GM12878 (cell line): ENCODE measurements at regions of chr6 and their contacts with region 1.

Region 1: DNA sequence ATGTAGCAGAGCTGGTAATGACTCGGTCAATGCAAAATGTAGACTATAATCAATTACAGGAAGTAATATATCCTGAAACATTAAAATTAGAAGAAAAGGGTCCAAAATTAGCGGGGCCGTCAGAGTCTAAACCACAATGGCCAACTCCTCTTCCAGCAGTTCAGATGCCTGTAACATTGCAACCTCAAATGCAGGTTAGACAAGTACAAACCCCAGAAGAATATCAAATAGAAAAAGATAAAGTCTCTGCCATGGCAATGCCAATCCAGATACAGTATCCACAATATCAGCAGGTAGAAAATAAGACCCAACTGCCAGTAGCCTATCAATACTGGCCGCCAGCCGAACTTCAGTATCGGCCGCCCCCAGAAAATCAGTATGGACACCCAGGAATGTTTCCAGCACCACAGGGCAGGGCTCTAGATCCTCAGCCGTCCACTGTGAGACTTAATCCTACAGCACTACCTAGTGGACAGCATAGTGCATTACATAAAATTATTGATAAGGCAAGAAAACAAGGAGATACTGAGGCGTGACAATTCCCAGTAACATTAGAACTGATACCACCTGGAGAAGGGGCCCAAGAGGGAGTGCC is 158.4 kb downstream of the GPX5 start:
- DNase-seq: no peak
- ATAC-seq: peak; percentile 60
- H3K4me3 ChIP-seq: no peak overlapping the region
- H3K27ac ChIP-seq: no peak overlapping the region
- H3K4me1 ChIP-seq: no peaks in the 10 kb centered on the region
- H3K27me3 ChIP-seq: no peaks in the 10 kb centered on the region
- CTCF ChIP-seq: peak; percentile 52 to 62 (median 60); a peak in 5 of 6 replicates
- EP300 ChIP-seq: no peak
- POLR2A ChIP-seq: no peak
- RAD21 ChIP-seq: peak; percentile 76

Region 2: GRCh38 chr6:27902335-27903314 is 781.4 kb before region 1 on chr6:
- CTCF ChIA-PET with region 1: no interaction called
- POLR2A ChIA-PET with region 1: no interaction called
- RAD21 ChIA-PET with region 1: no interaction called
- SMC1A ChIA-PET with region 1: no interaction called
- in situ Hi-C with region 1: no loop called
- intact Hi-C with region 1: loop called (anchors 10 kb)
- DNase-seq: peak; percentile 84
- ATAC-seq: peak; percentile 82
- H3K4me3 ChIP-seq: peak overlapping the region; percentile 82
- H3K27ac ChIP-seq: peak overlapping the region; percentile 77
- H3K4me1 ChIP-seq: peaks cover 13% of the 10 kb centered on the region; the same call in 1 of the 2 replicates
- H3K27me3 ChIP-seq: no peaks in the 10 kb centered on the region
- CTCF ChIP-seq: no peak
- EP300 ChIP-seq: peak in 1 of 2 experiments; percentile 73; a peak in 2 of 4 replicates
- POLR2A ChIP-seq: no peak
- RAD21 ChIP-seq: no peak

Region 3: GRCh38 chr6:28393911-28394662 is 290.0 kb before region 1 on chr6:
- CTCF ChIA-PET with region 1: no interaction called
- POLR2A ChIA-PET with region 1: no interaction called
- RAD21 ChIA-PET with region 1: no interaction called
- SMC1A ChIA-PET with region 1: no interaction called
- in situ Hi-C with region 1: no loop called
- intact Hi-C with region 1: loop called (anchors 5 kb)
- DNase-seq: no peak
- ATAC-seq: no peak
- H3K4me3 ChIP-seq: no peak overlapping the region
- H3K27ac ChIP-seq: no peak overlapping the region
- H3K4me1 ChIP-seq: peaks cover 4% of the 10 kb centered on the region; the same call in 1 of the 2 replicates
- H3K27me3 ChIP-seq: no peaks in the 10 kb centered on the region
- CTCF ChIP-seq: peak; percentile 10 to 33 (median 22); a peak in 4 of 6 replicates
- EP300 ChIP-seq: no peak
- POLR2A ChIP-seq: no peak
- RAD21 ChIP-seq: 0 out of 2 replicates have a peak, but pooled peaks have one; percentile 9

Region 4: DNA sequence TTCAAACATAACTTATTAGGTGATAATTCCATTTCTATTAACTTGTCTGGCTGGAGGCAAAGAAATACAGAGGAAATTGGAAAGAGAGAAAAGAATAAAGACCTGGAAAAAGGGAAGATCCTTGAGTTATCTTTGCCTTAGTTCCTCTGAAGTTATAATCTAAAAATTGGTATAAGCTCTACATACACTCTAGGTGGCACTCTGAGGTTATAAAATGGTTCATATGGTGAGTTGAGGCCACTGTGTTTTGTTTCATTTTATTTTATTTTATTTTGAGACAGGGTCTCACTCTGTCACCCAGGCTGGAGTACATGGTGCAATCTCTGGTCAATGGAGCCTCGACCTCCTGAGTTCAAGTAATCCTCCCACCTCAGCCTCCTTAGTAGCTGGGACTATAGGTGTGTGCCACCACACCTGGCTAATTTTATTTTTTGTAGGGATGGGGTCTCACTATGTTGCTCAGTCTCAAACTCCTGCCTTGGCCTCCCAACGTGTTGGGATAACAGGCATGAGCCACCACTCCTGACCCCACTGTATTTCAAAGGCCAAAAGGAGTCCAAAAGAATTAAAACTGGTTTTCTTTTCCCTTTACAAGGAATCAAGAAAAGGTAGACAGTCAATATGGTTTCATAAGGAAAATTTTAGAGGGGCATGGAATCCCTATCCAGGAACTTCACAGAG is 187.8 kb before region 1 on chr6:
- CTCF ChIA-PET with region 1: no interaction called
- POLR2A ChIA-PET with region 1: no interaction called
- RAD21 ChIA-PET with region 1: interaction called, 4 read pairs
- SMC1A ChIA-PET with region 1: interaction called, 3 read pairs
- in situ Hi-C with region 1: no loop called
- intact Hi-C with region 1: loop called (anchors 5 kb)
- DNase-seq: no peak
- ATAC-seq: no peak
- H3K4me3 ChIP-seq: no peak overlapping the region
- H3K27ac ChIP-seq: no peak overlapping the region
- H3K4me1 ChIP-seq: no peaks in the 10 kb centered on the region
- H3K27me3 ChIP-seq: no peaks in the 10 kb centered on the region; a peak in 1 of 4 replicates
- CTCF ChIP-seq: peak in 2 of 3 experiments; percentile 14 to 38; a peak in 1 of 6 replicates
- EP300 ChIP-seq: no peak
- POLR2A ChIP-seq: no peak
- RAD21 ChIP-seq: peak; percentile 54

Region 5: GRCh38 chr6:28542440-28543296 is 141.4 kb before region 1 on chr6:
- CTCF ChIA-PET with region 1: no interaction called
- POLR2A ChIA-PET with region 1: no interaction called
- RAD21 ChIA-PET with region 1: no interaction called
- SMC1A ChIA-PET with region 1: no interaction called
- in situ Hi-C with region 1: no loop called
- intact Hi-C with region 1: loop called (anchors 5 kb)
- DNase-seq: peak; percentile 64
- ATAC-seq: peak; percentile 90
- H3K4me3 ChIP-seq: peak overlapping the region; percentile 60; the same call in 1 of the 2 replicates
- H3K27ac ChIP-seq: no peak overlapping the region
- H3K4me1 ChIP-seq: peaks cover 2% of the 10 kb centered on the region; the same call in 1 of the 2 replicates
- H3K27me3 ChIP-seq: no peaks in the 10 kb centered on the region
- CTCF ChIP-seq: peak; percentile 51 to 75 (median 72); a peak in 5 of 6 replicates
- EP300 ChIP-seq: no peak
- POLR2A ChIP-seq: no peak
- RAD21 ChIP-seq: peak; percentile 45

Region 6: GRCh38 chr6:29016559-29017427 is 332.8 kb after region 1 on chr6:
- CTCF ChIA-PET with region 1: interaction called, 11 read pairs
- POLR2A ChIA-PET with region 1: no interaction called
- RAD21 ChIA-PET with region 1: no interaction called
- SMC1A ChIA-PET with region 1: interaction called, 6 read pairs
- in situ Hi-C with region 1: loop called (anchors 5 kb)
- intact Hi-C with region 1: loop called (anchors 1 kb)
- DNase-seq: peak; percentile 56
- ATAC-seq: peak; percentile 97
- H3K4me3 ChIP-seq: peak overlapping the region; percentile 53
- H3K27ac ChIP-seq: no peak overlapping the region
- H3K4me1 ChIP-seq: no peaks in the 10 kb centered on the region
- H3K27me3 ChIP-seq: no peaks in the 10 kb centered on the region; a peak in 2 of 4 replicates
- CTCF ChIP-seq: peak; percentile 76 to 89 (median 78)
- EP300 ChIP-seq: no peak
- POLR2A ChIP-seq: no peak
- RAD21 ChIP-seq: peak; percentile 75

Region 7: DNA sequence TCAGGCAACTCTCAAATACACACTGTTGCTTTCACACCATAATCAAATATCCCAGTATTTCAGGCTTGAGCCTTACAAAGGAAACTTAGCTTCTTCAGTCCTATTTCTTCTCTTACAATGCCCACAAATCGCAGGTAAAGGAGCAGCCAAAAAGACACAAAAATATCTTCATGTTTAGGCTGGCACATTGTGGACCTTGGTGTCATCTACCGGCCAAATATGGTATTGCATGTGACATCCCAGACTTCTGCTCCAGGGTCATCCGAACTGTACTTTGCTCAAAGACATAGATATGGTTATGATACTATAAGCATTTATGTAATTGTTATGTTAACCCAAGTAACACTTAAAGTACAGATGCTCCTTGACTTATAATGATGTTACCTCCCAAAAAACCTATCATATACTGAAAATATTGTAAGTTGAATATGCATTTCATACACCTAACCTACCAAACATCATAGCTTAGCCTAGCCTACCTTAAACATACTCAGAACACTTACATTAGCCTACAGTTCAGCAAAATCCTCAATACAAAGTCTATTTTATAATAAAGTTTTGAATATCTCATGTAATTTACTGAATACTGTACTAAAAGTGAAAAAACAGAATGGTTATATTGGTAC is 905.5 kb after region 1 on chr6:
- CTCF ChIA-PET with region 1: interaction called, 3 read pairs
- POLR2A ChIA-PET with region 1: no interaction called
- RAD21 ChIA-PET with region 1: interaction called, 3 read pairs
- SMC1A ChIA-PET with region 1: no interaction called
- in situ Hi-C with region 1: no loop called
- intact Hi-C with region 1: loop called (anchors 5 kb)
- DNase-seq: peak; percentile 12
- ATAC-seq: peak; percentile 86
- H3K4me3 ChIP-seq: no peak overlapping the region
- H3K27ac ChIP-seq: no peak overlapping the region
- H3K4me1 ChIP-seq: no peaks in the 10 kb centered on the region
- H3K27me3 ChIP-seq: no peaks in the 10 kb centered on the region; a peak in 1 of 4 replicates
- CTCF ChIP-seq: peak; percentile 94 to 99 (median 99)
- EP300 ChIP-seq: no peak
- POLR2A ChIP-seq: no peak
- RAD21 ChIP-seq: peak; percentile 98